ENCODE measurements at regions of chr3 and their contacts with region 1.

Region 1: GRCh38 chr3:159149633-159150032 is 347.8 kb downstream of the MFSD1 start:
- ATAC-seq: no peak
- H3K4me3 ChIP-seq: no peak overlapping the region
- H3K27ac ChIP-seq: peak overlapping the region in 1 of 2 donors; percentile 41
- H3K4me1 ChIP-seq: peaks cover 24 to 60% of the 10 kb centered on the region in 2 donors

Region 2: GRCh38 chr3:158918008-158918407 is 231.6 kb before region 1 on chr3:
- in situ Hi-C with region 1: loop called in 1 of 9 experiments (anchors 10 kb)
- ATAC-seq: peak; percentile 82 to 98 (median 92)
- H3K4me3 ChIP-seq: no peak overlapping the region
- H3K27ac ChIP-seq: no peak overlapping the region
- H3K4me1 ChIP-seq: peaks cover 5 to 25% of the 10 kb centered on the region in 2 donors

Region 3: DNA sequence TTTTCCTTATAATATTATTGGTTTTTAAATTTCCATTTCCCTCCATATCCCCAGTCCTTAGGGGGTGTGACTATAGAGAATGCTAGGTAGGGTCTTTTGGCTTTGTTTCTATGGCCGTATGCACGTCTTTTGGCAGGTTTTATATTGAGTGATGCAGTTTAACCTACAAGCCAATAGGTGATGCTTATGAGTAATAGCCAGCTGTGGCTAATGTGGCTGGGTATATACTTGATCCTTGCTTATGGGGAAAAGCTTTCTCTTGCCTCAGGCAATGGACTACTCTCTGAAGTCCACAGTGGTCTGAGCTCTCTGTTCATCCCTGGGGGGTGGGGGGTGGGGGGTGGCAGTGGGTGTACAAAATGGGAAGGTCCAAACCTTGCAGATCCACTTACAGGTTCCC is 123.9 kb before region 1 on chr3:
- in situ Hi-C with region 1: no loop called
- ATAC-seq: no peak
- H3K4me3 ChIP-seq: no peak overlapping the region
- H3K27ac ChIP-seq: no peak overlapping the region
- H3K4me1 ChIP-seq: no peaks in the 10 kb centered on the region

Region 4: DNA sequence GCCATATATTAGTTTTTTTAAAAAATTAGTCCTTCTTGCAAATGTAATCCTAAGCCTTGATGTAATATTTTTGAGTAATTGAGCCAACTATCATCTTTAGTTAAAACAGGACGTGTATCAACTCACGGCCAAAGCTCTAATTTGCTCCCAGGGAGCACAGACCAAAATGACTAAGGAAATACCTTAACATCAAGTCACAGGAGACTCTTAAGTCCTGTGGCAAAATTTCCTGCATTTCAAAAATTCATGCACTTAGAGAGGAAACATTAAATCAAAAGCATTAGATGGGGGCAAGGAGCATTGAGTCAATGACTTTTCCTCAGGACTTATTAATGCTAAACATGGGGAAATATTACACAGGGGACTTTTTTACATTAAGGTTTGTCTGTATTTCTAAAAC is 71.8 kb before region 1 on chr3:
- in situ Hi-C with region 1: no loop called
- ATAC-seq: no peak
- H3K4me3 ChIP-seq: no peak overlapping the region
- H3K27ac ChIP-seq: no peak overlapping the region
- H3K4me1 ChIP-seq: peaks cover 0 to 46% of the 10 kb centered on the region in 2 donors

Region 5: DNA sequence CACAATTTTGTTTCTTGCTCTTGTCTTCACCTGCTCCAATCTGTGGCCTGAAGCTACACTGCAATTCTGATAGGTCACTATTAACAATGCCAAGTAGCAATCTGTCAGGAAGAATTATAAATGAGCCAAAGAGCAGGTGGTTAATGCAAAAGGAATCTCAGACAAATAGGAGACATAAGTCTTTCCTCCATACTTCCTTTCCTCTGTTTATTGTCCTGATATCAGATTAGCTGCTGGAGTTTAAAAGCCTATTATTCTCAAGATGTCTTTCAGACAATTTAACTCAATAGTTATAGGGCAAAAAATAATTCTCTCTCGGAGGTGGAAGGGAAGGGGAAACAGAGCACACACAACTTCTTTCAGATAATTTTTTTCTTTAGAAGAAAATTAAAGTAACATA is 143.9 kb after region 1 on chr3:
- in situ Hi-C with region 1: no loop called
- ATAC-seq: no peak
- H3K4me3 ChIP-seq: no peak overlapping the region
- H3K27ac ChIP-seq: no peak overlapping the region
- H3K4me1 ChIP-seq: no peaks in the 10 kb centered on the region

Region 6: DNA sequence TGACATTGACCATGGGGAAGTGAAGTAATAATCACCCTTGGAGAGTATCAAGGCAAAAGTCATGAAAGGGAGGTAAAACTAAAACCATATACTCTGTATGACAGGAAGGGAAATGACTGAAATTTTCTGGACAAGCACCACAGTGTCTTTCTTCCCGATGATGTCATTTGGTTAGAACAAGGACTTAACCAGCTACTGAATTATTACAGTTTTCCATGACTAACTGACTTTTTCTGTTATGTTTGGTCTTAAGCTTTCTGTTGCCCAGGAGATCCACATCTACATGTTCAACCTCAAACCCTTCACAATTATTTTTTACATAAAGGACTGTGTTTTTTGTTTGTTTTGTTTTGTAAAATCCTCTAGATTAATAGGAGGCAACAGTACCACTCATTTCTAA is 647.1 kb after region 1 on chr3:
- in situ Hi-C with region 1: no loop called
- ATAC-seq: peak in 5 of 8 experiments; percentile 9 to 88 (median 64)
- H3K4me3 ChIP-seq: no peak overlapping the region
- H3K27ac ChIP-seq: no peak overlapping the region
- H3K4me1 ChIP-seq: no peaks in the 10 kb centered on the region

Measured in motor neuron (in vitro differentiated cells).